Psoas muscle (tissue), 8 donors: ENCODE measurements at regions of chr7 and their contacts with region 1.

Region 1: GRCh38 chr7:131068604-131069021 is 259.1 kb upstream of the MKLN1 start:
- DNase-seq: no peak
- ATAC-seq: no peak
- H3K4me3 ChIP-seq: no peak overlapping the region
- H3K27ac ChIP-seq: peak overlapping the region; percentile 42
- H3K4me1 ChIP-seq: peaks cover 48% of the 10 kb centered on the region
- H3K27me3 ChIP-seq: no peaks in the 10 kb centered on the region
- CTCF ChIP-seq: peak; percentile 17

Region 2: DNA sequence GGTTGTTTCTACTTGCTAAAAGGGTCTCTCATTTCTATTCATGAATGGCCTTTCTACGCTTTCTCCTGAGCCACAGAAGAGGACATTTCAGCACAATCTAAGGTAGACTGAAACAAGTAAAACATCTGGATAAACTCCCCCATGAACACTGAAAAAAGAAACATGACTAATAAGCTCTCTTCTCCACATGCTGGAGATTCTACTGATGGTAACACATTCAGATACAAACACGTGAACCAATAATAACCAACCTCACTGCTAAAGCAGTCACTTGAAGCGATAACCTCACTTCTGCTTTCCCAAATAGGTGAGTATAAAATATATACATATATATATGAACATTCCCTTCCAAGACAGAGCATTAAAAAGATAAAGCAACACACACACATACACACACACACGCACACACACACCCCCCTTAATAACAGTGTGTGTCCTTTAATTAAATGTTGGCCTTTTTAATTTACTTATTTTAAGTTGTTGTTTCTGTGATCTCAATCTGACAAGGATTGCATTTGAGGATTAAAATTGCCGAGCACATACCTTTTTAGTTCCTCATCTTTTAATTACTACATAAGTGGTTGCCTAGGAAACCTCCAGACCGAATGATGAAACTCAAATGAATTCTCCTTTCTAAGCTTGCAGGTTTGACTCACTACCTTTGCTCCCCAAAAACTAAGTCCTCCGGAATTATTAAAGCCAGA is 42.2 kb before region 1 on chr7:
- intact Hi-C with region 1: no loop called
- DNase-seq: no peak
- ATAC-seq: peak in 3 of 4 donors; percentile 23 to 54 (median 51)
- H3K4me3 ChIP-seq: no peak overlapping the region
- H3K27ac ChIP-seq: peak overlapping the region; percentile 14
- H3K4me1 ChIP-seq: peaks cover 84% of the 10 kb centered on the region
- H3K27me3 ChIP-seq: no peaks in the 10 kb centered on the region
- CTCF ChIP-seq: no peak

Region 3: GRCh38 chr7:131302876-131303707 is 234.5 kb after region 1 on chr7:
- intact Hi-C with region 1: loop called in 1 of 2 experiments (anchors 2 kb)
- DNase-seq: no peak
- ATAC-seq: peak; percentile 41 to 64 (median 54)
- H3K4me3 ChIP-seq: no peak overlapping the region
- H3K27ac ChIP-seq: no peak overlapping the region
- H3K4me1 ChIP-seq: peaks cover 24% of the 10 kb centered on the region
- H3K27me3 ChIP-seq: no peaks in the 10 kb centered on the region
- CTCF ChIP-seq: peak; percentile 57

Region 4: GRCh38 chr7:131424219-131424822 is 355.7 kb after region 1 on chr7:
- intact Hi-C with region 1: loop called in 1 of 2 experiments (anchors 10 kb)
- DNase-seq: no peak
- ATAC-seq: peak; percentile 57 to 67 (median 62)
- H3K4me3 ChIP-seq: no peak overlapping the region
- H3K27ac ChIP-seq: no peak overlapping the region
- H3K4me1 ChIP-seq: peaks cover 23% of the 10 kb centered on the region
- H3K27me3 ChIP-seq: no peaks in the 10 kb centered on the region
- CTCF ChIP-seq: peak; percentile 59

Region 5: DNA sequence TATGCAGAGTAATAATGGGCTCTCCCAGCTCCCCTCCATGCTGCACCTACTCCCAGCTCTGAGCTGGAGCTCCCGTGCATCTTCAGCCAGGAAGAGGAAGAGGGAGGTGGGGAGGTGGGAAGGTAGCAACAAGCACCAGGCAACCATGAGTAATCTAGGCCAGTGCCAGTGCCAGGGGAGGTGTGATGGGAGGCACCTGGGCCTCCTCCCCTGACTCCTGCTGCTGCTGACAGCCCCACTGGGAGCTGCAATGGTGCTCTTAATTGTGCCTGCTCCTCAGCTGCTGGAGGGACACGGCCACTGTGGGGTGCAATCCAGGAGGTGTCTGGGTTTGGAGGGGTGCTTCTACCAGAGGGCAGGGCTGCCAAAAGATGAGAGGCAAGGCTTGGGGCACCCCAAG is 1264.7 kb after region 1 on chr7:
- intact Hi-C with region 1: no loop called
- DNase-seq: no peak
- ATAC-seq: no peak
- H3K4me3 ChIP-seq: no peak overlapping the region
- H3K27ac ChIP-seq: no peak overlapping the region
- H3K4me1 ChIP-seq: no peaks in the 10 kb centered on the region
- H3K27me3 ChIP-seq: peaks cover 0 to 3% (median 3%) of the 10 kb centered on the region in 3 donors
- CTCF ChIP-seq: no peak